MCF 10A (cell line): ENCODE measurements at regions of chr10 and their contacts with region 1.

Region 1: DNA sequence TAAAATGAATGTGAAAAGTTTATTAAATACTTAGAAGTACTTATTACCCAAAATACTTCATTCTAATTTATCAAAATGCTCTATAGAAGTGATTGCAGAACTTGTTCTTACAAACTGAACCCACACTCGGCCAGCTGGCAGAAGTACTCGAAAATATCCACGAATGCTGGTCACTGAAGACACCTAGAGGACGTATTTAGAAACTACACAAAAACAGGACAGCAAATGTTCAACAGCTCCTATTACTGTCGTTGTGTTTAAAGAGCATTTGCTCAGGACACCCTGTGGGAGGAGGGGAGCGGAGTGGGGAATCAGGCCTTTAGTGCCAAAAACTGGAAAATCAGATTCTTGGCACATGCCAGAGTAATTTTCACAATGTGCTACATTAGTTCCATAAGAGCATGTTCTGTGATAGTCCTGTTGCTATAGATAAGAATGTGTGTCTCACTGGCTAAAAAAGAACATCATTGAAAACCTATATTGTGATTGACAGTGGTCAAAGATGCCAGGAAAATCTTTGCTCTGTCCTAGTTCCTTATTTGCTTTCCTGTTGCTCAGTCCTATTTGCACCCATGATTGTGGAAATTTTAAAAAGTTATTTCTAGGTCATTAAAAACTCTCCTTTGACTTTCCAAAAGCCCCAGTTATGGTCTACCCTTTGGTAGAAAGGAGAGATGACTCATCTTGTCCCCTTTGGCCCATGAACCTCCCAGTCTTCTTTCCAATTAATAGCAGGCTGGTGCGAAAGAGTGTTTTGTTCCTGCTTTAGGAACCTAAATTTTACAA is 49.0 kb upstream of the NRBF2 start:
- DNase-seq: peak; percentile 82
- H3K4me3 Mint-ChIP-seq: no peak overlapping the region
- H3K27ac Mint-ChIP-seq: no peak overlapping the region
- H3K4me1 Mint-ChIP-seq: no peaks in the 10 kb centered on the region
- H3K27me3 Mint-ChIP-seq: no peaks in the 10 kb centered on the region
- CTCF ChIP-seq: peak; percentile 74

Region 2: GRCh38 chr10:62268399-62269114 is 815.5 kb before region 1 on chr10 and contains the start of gene RTKN2:
- CTCF ChIA-PET with region 1: interaction called, 11 read pairs
- POLR2A ChIA-PET with region 1: no interaction called
- intact Hi-C with region 1: no loop called
- DNase-seq: peak; percentile 71
- H3K4me3 Mint-ChIP-seq: peak within 1 kb of the TSS; percentile 86
- H3K27ac Mint-ChIP-seq: peak within 1 kb of the TSS; percentile 39
- H3K4me1 Mint-ChIP-seq: peaks cover 21% of the 10 kb centered on the region
- H3K27me3 Mint-ChIP-seq: no peaks in the 10 kb centered on the region
- CTCF ChIP-seq: no peak
- total RNA-seq, gene RTKN2: 1.6 and 2.6 TPM in 2 replicates

Region 3: DNA sequence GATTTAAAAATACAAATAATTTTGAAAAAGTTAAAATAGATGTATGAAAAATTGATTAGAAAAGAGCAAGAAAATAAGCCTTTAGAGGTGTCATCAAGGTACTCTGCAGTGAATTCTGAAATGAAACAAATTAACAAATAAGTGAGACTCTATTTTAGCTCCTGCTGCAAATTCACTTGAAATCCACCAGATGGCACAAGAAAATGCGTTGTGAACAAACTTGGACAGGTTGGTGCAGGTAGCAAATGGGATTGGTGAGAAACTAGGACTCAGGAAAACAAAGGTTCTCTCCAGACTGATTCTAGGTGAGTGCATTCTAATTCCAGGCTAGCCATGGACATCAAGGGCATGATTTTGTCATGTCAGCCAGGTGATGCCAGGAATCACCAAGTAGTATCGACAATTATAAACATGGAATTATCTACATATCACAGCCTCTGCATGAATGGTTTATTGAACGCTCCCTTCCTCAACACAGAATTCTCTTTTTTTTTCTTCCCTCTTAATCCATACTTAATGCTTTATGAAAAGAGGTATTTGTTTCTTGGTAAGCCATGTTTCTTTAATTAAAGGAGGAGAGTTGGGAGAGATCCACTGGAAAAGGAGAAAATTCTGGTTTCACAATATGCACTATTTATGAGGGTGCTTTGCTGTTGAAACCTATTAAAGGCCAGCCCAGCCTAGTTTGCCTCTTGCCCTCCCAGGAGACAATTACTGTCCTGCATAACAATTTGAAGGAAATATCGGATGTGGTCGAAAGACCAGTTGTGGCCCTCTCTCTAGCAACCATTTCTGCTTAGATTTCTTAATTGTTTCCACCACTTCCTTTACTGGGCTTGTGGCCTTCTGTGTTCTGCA is 591.9 kb before region 1 on chr10:
- CTCF ChIA-PET with region 1: interaction called, 3 read pairs
- POLR2A ChIA-PET with region 1: no interaction called
- intact Hi-C with region 1: loop called (anchors 1 kb)
- DNase-seq: peak; percentile 61
- H3K4me3 Mint-ChIP-seq: no peak overlapping the region
- H3K27ac Mint-ChIP-seq: no peak overlapping the region
- H3K4me1 Mint-ChIP-seq: no peaks in the 10 kb centered on the region
- H3K27me3 Mint-ChIP-seq: no peaks in the 10 kb centered on the region
- CTCF ChIP-seq: peak; percentile 48

Region 4: DNA sequence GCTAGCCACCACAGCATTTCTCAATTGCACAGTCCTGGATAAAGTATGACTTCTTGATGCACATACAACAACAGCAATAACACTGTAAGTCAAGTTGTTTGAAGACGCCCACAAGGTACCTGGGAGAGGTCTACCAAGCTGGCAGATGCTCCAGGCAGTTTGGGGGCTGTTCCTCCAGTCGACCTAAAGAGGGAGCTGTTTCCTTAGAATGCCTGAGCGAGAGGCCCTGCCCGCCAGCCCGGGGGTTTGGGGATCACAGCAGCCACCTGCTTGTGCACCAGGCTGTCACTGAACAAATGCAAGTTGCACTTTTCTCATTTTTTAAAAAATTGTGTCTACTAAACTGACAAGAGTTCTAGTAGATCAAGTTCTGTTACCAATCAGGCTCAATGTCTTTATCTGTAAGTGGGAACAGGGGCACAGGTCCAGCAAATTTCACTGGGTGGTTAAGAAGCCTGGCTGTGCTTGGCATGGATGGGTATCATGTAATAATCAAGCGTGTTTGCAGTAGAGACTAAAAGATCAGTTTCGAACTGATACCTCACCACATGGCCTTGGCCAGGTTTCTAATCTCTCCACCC is 473.4 kb before region 1 on chr10:
- CTCF ChIA-PET with region 1: interaction called, 20 read pairs
- POLR2A ChIA-PET with region 1: interaction called, 3 read pairs
- intact Hi-C with region 1: loop called (anchors 1 kb)
- DNase-seq: peak; percentile 75
- H3K4me3 Mint-ChIP-seq: no peak overlapping the region
- H3K27ac Mint-ChIP-seq: no peak overlapping the region
- H3K4me1 Mint-ChIP-seq: peaks cover 5% of the 10 kb centered on the region
- H3K27me3 Mint-ChIP-seq: no peaks in the 10 kb centered on the region
- CTCF ChIP-seq: peak; percentile 87

Region 5: GRCh38 chr10:62816331-62817120 is 267.6 kb before region 1 on chr10 and contains the start of gene EGR2:
- CTCF ChIA-PET with region 1: interaction called, 6 read pairs
- POLR2A ChIA-PET with region 1: no interaction called
- intact Hi-C with region 1: loop called (anchors 1 kb)
- DNase-seq: peak; percentile 93
- H3K4me3 Mint-ChIP-seq: peak within 1 kb of the TSS; percentile 95
- H3K27ac Mint-ChIP-seq: peak within 1 kb of the TSS; percentile 95
- H3K4me1 Mint-ChIP-seq: peaks cover 24% of the 10 kb centered on the region
- H3K27me3 Mint-ChIP-seq: no peaks in the 10 kb centered on the region
- CTCF ChIP-seq: no peak
- total RNA-seq, gene EGR2: 0.25 and 1.0 TPM in 2 replicates

Region 6: GRCh38 chr10:63027531-63027930 is 56.6 kb before region 1 on chr10:
- CTCF ChIA-PET with region 1: no interaction called
- POLR2A ChIA-PET with region 1: no interaction called
- intact Hi-C with region 1: no loop called
- DNase-seq: no peak
- H3K4me3 Mint-ChIP-seq: no peak overlapping the region
- H3K27ac Mint-ChIP-seq: no peak overlapping the region
- H3K4me1 Mint-ChIP-seq: no peaks in the 10 kb centered on the region
- H3K27me3 Mint-ChIP-seq: no peaks in the 10 kb centered on the region
- CTCF ChIP-seq: no peak

Region 7: DNA sequence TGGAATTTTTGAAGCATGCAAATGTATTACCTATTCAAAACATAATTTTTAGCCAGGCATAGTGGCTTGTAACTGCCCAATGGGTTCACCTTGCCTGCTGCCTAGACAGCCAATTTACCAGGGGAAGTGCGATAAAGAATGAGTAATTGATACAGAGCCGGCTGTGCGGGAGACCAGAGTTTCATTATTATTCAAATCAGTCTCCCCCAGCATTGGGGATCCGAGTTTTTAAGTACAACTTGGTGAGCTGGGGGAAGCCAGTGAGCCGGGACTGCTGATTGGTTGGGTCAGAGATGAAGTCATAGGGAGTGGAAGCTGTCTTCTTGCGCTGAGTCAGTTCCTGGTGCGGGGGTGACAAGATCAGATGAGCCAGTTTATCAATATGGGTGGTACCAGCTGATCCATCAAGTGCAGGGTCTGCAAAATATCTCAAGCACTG is 19.9 kb after region 1 on chr10:
- CTCF ChIA-PET with region 1: no interaction called
- POLR2A ChIA-PET with region 1: no interaction called
- intact Hi-C with region 1: no loop called
- DNase-seq: no peak
- H3K4me3 Mint-ChIP-seq: no peak overlapping the region
- H3K27ac Mint-ChIP-seq: no peak overlapping the region
- H3K4me1 Mint-ChIP-seq: peaks cover 14% of the 10 kb centered on the region
- H3K27me3 Mint-ChIP-seq: no peaks in the 10 kb centered on the region
- CTCF ChIP-seq: no peak

Region 8: DNA sequence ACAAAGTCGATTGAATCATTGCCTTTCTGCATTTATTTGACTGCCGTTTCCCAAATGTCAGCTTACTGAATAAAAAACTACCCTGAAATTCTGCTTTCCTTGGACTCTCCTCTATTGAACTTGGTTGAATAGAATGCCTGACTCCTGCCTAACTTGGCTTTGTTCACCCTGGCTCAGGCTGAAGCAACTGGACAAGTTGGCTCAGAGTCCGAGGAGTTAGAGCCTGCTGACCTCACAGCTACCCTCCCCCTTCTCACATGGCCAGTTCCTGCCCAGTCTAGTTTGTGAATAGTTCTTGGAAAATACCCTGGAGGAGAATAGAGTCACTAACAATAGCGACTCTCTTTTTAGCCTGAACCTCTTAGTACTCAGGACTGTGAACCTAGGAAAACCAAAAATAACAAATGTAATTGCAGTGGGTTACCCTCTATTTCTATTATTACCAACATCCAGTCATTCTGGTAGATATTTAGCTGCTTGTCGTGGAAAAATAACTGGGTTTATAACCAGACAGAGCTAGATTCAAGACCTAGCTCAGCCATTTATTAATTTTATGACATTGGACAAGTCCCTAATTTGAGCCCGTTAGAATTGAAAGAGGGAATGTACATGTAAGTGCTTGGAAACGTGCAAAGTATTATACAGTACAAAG is 31.8 kb after region 1 on chr10:
- CTCF ChIA-PET with region 1: no interaction called
- POLR2A ChIA-PET with region 1: no interaction called
- intact Hi-C with region 1: loop called (anchors 2 kb)
- DNase-seq: peak; percentile 97
- H3K4me3 Mint-ChIP-seq: no peak overlapping the region
- H3K27ac Mint-ChIP-seq: peak overlapping the region; percentile 99
- H3K4me1 Mint-ChIP-seq: peaks cover 24% of the 10 kb centered on the region
- H3K27me3 Mint-ChIP-seq: no peaks in the 10 kb centered on the region
- CTCF ChIP-seq: no peak

Region 9: GRCh38 chr10:63157845-63158624 is 73.9 kb after region 1 on chr10:
- CTCF ChIA-PET with region 1: interaction called, 25 read pairs
- POLR2A ChIA-PET with region 1: interaction called, 3 read pairs
- intact Hi-C with region 1: loop called (anchors 1 kb)
- DNase-seq: peak; percentile 89
- H3K4me3 Mint-ChIP-seq: no peak overlapping the region
- H3K27ac Mint-ChIP-seq: no peak overlapping the region
- H3K4me1 Mint-ChIP-seq: no peaks in the 10 kb centered on the region
- H3K27me3 Mint-ChIP-seq: no peaks in the 10 kb centered on the region
- CTCF ChIP-seq: peak; percentile 67